IMR-90 (cell line): ENCODE measurements at regions of chr5 and their contacts with region 1.

Region 1: GRCh38 chr5:50325237-50325832 is 115.8 kb downstream of the EMB start:
- DNase-seq: peak; percentile 28
- ATAC-seq: no peak
- H3K4me3 ChIP-seq: no peak overlapping the region
- H3K27ac ChIP-seq: no peak overlapping the region
- H3K4me1 ChIP-seq: no peaks in the 10 kb centered on the region
- H3K27me3 ChIP-seq: no peaks in the 10 kb centered on the region
- CTCF ChIP-seq: peak; percentile 63
- POLR2A ChIP-seq: no peak
- RAD21 ChIP-seq: peak; percentile 59

Region 2: GRCh38 chr5:50751064-50751657 is 425.8 kb after region 1 on chr5:
- CTCF ChIA-PET with region 1: no interaction called
- POLR2A ChIA-PET with region 1: no interaction called
- dilution Hi-C with region 1: no loop called
- in situ Hi-C with region 1: no loop called
- intact Hi-C with region 1: loop called (anchors 10 kb)
- DNase-seq: peak; percentile 55
- ATAC-seq: peak; percentile 86
- H3K4me3 ChIP-seq: no peak overlapping the region
- H3K27ac ChIP-seq: no peak overlapping the region
- H3K4me1 ChIP-seq: no peaks in the 10 kb centered on the region
- H3K27me3 ChIP-seq: no peaks in the 10 kb centered on the region
- CTCF ChIP-seq: peak; percentile 79
- POLR2A ChIP-seq: no peak
- RAD21 ChIP-seq: peak; percentile 84